A673 (cell line): ENCODE measurements at regions of chr3 and their contacts with region 1.

Region 1: DNA sequence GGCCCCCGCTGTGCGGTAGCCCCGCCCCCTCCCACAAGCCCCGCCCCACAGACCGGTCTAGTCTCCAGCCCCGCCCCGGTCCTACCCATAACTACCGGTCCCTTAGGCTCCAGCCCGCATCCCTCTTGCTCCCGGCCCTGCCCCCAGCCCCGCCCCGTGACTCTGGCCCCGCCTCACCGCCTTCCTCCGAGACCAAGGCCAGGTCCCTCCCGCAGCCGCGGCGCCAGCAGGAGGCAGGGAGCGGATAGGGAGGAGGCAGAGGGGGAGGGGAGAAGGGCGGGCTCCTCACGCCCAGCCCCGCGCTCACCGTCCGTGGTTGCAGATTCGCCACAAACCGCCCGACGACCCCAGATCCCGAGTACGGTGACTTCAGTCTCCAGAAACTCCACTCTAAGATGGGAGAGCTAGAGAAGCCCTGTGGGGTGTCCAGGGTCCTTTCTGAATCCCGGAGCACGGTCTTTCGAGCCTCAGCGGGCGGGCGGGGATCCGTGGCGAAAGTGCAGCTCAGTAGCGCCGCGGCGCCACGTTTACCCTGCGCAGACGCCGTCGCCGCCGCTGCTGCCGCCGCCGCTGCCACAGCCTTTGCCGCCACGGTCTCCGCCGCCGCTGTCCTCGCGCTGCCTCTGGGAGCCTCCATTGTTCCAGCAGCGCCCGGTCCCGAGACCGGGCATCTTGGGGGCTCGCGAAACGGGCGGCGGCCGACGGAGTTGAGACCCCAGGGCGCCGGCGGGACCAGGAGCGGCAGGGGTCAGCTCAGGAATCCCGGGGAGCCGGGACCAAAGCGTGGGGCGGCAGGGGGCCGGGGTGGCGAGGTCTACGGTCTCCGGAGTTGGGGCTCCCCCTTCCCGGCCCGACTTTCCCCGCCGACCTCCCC is at the start of gene BRPF1:
- DNase-seq: peak; percentile 100
- H3K4me3 ChIP-seq: peak within 1 kb of the TSS; percentile 100
- H3K27ac ChIP-seq: peak within 1 kb of the TSS; percentile 99
- H3K4me1 ChIP-seq: peaks cover 12% of the 10 kb centered on the region
- H3K27me3 ChIP-seq: no peaks in the 10 kb centered on the region
- CTCF ChIP-seq: no peak
- total RNA-seq, gene BRPF1: 30.7 and 32.0 TPM in 2 replicates

Region 2: DNA sequence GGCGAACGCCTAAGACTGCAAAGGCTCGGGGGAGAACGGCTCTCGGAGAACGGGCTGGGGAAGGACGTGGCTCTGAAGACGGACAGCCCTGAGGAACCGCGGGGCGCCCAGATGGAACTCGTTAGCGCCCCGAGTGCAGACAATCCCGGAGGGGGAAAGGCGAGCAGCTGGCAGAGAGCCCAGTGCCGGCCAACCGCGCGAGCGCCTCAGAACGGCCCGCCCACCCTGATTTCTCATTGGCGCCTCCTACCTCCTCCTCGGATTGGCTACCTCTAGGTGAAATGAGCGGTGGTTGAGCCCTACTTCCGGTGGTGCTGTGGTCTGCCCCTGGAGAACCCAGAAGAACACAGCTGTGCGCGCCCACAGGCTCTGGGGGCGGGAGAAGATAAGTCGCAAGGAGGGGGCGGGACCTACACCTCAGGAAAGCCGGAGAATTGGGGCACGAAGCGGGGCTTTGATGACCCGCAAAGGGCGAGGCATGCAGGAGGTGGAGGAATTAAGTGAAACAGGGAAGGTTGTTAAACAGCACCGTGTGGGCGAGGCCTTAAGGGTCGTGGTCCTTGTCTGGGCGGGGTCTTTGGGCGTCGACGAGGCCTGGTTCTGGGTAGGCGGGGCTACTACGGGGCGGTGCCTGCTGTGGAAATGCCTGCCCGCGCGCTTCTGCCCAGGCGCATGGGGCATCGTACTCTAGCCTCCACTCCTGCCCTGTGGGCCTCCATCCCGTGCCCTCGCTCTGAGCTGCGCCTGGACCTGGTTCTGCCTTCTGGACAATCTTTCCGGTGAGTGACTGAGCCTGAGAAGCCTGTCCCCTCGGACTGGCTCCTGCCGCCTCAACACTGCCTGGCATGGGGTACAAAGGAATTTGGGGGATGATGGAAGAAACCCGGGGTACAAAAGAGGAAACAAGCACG is 18.5 kb after region 1 on chr3 and contains the start of gene OGG1:
- CTCF ChIA-PET with region 1: interaction called, 3 read pairs
- POLR2A ChIA-PET with region 1: no interaction called
- intact Hi-C with region 1: loop called (anchors 1 kb)
- DNase-seq: peak; percentile 99
- H3K4me3 ChIP-seq: peak within 1 kb of the TSS; percentile 62
- H3K27ac ChIP-seq: peak within 1 kb of the TSS; percentile 89
- H3K4me1 ChIP-seq: peaks cover 11% of the 10 kb centered on the region
- H3K27me3 ChIP-seq: no peaks in the 10 kb centered on the region
- CTCF ChIP-seq: no peak
- total RNA-seq, gene OGG1: 48.8 and 60.2 TPM in 2 replicates

Region 3: GRCh38 chr3:9946112-9947024 is 214.9 kb after region 1 on chr3:
- CTCF ChIA-PET with region 1: no interaction called
- POLR2A ChIA-PET with region 1: no interaction called
- intact Hi-C with region 1: no loop called
- DNase-seq: peak; percentile 96
- H3K4me3 ChIP-seq: peak overlapping the region; percentile 76
- H3K27ac ChIP-seq: peak overlapping the region; percentile 75
- H3K4me1 ChIP-seq: no peaks in the 10 kb centered on the region
- H3K27me3 ChIP-seq: no peaks in the 10 kb centered on the region
- CTCF ChIP-seq: peak; percentile 77